PC-9 (cell line): ENCODE measurements at regions of chr5 and their contacts with region 1.

Region 1: GRCh38 chr5:66864331-66864840 is 268.2 kb downstream of the MAST4 start:
- DNase-seq: peak in 1 of 2 experiments; percentile 25
- H3K4me3 ChIP-seq: no peak overlapping the region
- H3K27ac ChIP-seq: no peak overlapping the region
- H3K4me1 ChIP-seq: peaks cover 19% of the 10 kb centered on the region
- H3K27me3 ChIP-seq: no peaks in the 10 kb centered on the region
- CTCF ChIP-seq: peak; percentile 80

Region 2: DNA sequence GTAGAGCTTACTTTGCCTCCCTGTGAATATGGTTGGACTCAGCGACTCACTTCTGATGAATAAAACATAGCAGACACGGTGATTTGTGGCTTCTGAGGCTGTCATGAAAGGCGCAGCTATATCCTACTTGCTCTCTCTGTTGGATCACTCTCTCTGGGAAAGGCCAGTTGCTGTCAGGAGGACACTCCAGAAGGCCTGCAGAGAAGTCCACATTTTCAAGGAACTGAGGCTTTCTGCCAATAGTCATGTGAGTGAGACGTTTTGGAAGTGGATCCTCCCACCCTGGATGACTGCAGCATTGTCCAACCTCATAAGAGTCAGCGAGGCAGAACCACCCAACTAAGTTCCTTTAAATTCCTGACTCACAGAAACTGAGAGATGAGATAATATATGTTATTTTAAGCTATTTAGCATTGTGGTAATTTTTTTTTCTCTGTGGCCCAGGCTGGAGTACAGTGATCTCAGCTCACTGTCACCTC is 424.1 kb before region 1 on chr5:
- CTCF ChIA-PET with region 1: no interaction called
- POLR2A ChIA-PET with region 1: no interaction called
- intact Hi-C with region 1: no loop called
- DNase-seq: no peak
- H3K4me3 ChIP-seq: no peak overlapping the region
- H3K27ac ChIP-seq: no peak overlapping the region
- H3K4me1 ChIP-seq: no peaks in the 10 kb centered on the region
- H3K27me3 ChIP-seq: no peaks in the 10 kb centered on the region
- CTCF ChIP-seq: no peak

Region 3: GRCh38 chr5:66814146-66814991 is 50.0 kb before region 1 on chr5:
- CTCF ChIA-PET with region 1: interaction called, 4 read pairs
- POLR2A ChIA-PET with region 1: no interaction called
- intact Hi-C with region 1: loop called (anchors 2 kb)
- DNase-seq: peak in 1 of 2 experiments; percentile 29
- H3K4me3 ChIP-seq: no peak overlapping the region
- H3K27ac ChIP-seq: no peak overlapping the region
- H3K4me1 ChIP-seq: no peaks in the 10 kb centered on the region
- H3K27me3 ChIP-seq: no peaks in the 10 kb centered on the region
- CTCF ChIP-seq: peak; percentile 93

Region 4: DNA sequence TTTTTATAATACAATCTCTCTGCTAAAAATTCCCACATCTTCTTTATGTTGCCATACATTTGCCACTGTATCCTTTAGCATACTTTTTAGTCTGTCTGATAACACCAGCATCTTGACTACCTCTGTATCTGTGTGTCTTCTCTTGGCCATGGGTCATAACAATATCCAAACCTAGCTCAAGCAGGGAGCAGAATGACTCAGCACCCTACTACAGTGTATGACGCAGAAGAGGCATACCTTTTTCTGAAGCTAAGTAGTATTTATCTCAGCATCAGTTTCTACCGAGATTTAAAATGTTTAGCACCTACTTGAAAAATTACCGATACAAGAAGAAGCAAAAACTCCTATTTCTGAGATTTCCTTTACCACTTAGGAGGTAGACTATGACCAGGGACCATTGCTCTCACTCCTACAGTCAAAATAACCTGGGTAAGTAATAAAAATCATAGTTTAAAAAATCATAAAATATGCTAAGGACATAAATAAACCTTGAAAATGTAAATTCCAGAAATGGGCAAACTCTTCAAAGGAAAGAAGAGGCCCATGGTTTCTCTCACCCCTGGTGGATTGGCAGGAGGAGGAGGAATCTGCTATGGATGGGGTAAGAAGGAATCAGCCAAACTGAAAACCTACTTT is 18.3 kb after region 1 on chr5:
- CTCF ChIA-PET with region 1: interaction called, 5 read pairs
- POLR2A ChIA-PET with region 1: interaction called, 10 read pairs
- intact Hi-C with region 1: no loop called
- DNase-seq: peak; percentile 37 to 84
- H3K4me3 ChIP-seq: peak overlapping the region; percentile 50
- H3K27ac ChIP-seq: peak overlapping the region; percentile 98
- H3K4me1 ChIP-seq: peaks cover 57% of the 10 kb centered on the region
- H3K27me3 ChIP-seq: no peaks in the 10 kb centered on the region
- CTCF ChIP-seq: no peak

Region 5: DNA sequence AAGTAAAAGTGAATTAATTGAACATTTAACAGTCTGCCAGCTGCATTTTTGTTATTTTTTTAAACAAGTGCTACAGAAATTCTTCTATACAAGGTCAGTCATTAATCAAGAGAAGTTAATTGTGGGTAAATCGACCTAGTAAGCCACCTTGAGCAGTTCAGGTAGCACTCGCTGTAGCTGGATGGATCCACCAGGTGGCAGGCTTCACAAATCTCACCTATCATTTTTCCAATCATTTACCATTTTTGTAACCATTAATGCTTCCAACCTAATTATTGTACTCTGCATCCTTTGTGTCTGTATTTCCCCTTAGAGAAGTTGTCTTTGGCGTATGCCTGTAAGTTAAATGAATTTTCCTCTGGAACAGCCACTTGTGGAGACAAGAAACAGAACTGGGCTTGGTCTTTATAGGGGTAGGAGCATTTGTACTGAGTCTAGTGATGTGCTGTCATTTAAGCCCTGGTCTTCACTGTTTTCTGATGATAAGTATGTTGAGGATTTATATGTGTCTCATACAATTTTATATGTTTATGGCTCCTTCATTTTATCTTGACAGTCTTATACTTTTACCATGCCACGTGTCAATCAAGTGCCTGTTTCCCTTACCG is 292.7 kb after region 1 on chr5:
- CTCF ChIA-PET with region 1: no interaction called
- POLR2A ChIA-PET with region 1: no interaction called
- intact Hi-C with region 1: no loop called
- DNase-seq: peak in 1 of 2 experiments; percentile 45
- H3K4me3 ChIP-seq: no peak overlapping the region
- H3K27ac ChIP-seq: no peak overlapping the region
- H3K4me1 ChIP-seq: peaks cover 29% of the 10 kb centered on the region
- H3K27me3 ChIP-seq: no peaks in the 10 kb centered on the region
- CTCF ChIP-seq: peak; percentile 85